H1 (cell line): ENCODE measurements at regions of chr3 and their contacts with region 1.

Region 1: GRCh38 chr3:147361454-147362420 is 44.6 kb downstream of the ZIC4 start:
- DNase-seq: peak in 1 of 2 experiments; percentile 99
- H3K4me3 ChIP-seq: peak overlapping the region in 2 of 4 experiments; percentile 14 to 48; a peak in 4 of 8 replicates
- H3K27ac ChIP-seq: no peak overlapping the region
- H3K4me1 ChIP-seq: peaks cover 10 to 25% (median 14%) of the 10 kb centered on the region in 4 experiments
- H3K27me3 ChIP-seq: peaks cover 44 to 75% (median 71%) of the 10 kb centered on the region in 4 experiments
- CTCF ChIP-seq: peak; percentile 78 to 88 (median 82)
- EP300 ChIP-seq: no peak
- POLR2A ChIP-seq: no peak
- RAD21 ChIP-seq: peak; percentile 64 to 65

Region 2: DNA sequence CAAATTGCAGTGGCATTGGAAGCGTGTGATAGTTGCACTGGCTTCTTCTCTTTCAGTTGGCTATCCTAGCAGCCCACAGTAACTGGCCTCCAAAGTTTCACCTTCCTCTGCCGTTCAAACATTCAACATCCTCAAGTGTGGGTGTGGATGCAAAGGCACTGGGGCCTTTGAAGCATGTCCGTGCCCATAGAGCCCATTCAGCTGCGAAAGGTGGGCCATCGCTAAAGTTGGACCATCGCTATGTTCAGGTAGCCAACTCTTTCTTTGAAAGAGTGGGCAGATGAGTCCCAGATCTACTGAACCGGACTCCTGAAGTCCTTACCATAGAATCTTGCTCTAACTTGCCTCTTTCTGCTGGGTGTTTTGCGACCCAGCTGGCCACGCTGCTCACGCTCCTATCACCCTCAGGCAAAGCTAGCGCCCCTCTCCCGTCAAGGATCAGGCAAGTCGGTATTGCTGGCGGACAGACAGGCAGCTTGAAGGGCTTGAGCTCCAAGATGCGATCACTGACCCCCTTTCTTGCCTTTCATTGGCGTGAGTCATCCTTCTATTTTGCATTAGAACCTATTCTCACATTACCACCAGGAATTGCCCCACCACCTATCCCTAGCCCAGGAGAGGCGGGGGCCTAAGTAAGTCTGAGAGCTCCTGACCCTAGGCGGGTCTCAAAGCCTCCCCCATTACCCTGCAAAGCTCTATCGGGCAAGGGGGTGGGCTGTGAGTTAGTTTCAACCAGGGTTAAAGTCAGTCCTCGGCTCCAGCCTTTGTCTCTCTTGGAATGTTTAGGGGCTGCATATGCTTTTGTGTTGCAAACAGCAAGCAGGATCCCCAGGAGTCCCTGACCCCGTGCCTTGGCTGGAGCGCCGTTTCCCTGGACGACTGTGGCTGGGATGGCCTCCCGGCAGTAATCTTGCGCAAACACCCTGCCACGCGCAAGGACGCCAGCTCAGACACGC is 16.0 kb after region 1 on chr3:
- CTCF ChIA-PET with region 1: interaction called, 162 read pairs
- POLR2A ChIA-PET with region 1: interaction called, 3 read pairs
- DNase-seq: peak; percentile 76 to 82
- H3K4me3 ChIP-seq: peak overlapping the region; percentile 27 to 62 (median 36); a peak in 7 of 8 replicates
- H3K27ac ChIP-seq: peak overlapping the region; percentile 3; the same call in 1 of the 2 replicates
- H3K4me1 ChIP-seq: peaks cover 10 to 35% (median 24%) of the 10 kb centered on the region in 4 experiments
- H3K27me3 ChIP-seq: peaks cover 50 to 78% (median 65%) of the 10 kb centered on the region in 4 experiments
- CTCF ChIP-seq: no peak
- EP300 ChIP-seq: no peak
- POLR2A ChIP-seq: no peak
- RAD21 ChIP-seq: no peak; a peak in 1 of 4 replicates

Region 3: DNA sequence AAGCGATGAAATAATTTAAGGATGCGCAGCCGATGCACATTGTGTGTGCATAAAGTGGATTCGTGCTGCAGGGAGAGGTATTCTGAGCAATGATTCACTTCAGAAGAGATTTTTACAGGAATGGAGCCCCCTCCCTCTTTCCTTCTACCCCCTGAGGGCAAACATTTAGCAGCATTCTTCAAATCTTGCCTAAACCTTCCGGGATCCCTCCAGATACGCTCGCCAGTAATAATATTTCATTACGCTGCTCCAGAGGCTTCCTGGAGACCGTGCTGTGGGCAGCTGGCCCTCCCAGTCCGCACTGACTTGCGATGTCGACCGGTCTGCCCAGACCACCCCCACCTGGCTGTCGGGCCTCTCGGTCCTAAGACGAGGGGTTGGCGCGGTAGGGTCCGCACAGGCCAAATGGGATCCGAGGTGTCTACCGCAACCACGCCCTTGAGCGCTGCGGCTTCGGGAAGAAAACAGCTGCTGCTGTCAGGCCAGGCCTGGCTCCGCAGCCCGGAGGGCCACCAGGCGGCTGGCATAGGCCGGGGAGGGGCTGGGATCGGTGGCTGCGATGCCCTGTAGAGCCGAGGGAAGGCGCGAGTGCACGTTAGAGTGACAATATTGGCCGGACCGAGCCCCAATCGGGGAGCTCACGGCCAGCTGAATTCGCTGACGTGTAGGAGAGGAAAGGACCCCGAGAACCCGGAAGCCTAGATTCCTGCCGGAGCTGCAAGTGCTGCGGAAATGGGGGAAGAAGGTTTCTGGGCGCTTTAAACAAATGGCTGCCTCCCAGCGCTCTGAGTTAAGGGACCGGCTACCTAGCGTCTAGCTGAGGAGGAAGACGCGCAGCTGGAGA is 30.3 kb after region 1 on chr3:
- CTCF ChIA-PET with region 1: interaction called, 91 read pairs
- POLR2A ChIA-PET with region 1: interaction called, 3 read pairs
- DNase-seq: peak in 1 of 2 experiments; percentile 90
- H3K4me3 ChIP-seq: peak overlapping the region; percentile 30 to 68 (median 50); a peak in 7 of 8 replicates
- H3K27ac ChIP-seq: no peak overlapping the region
- H3K4me1 ChIP-seq: peaks cover 20 to 47% (median 21%) of the 10 kb centered on the region in 4 experiments
- H3K27me3 ChIP-seq: peaks cover 76 to 97% (median 92%) of the 10 kb centered on the region in 4 experiments
- CTCF ChIP-seq: peak in 2 of 3 experiments; percentile 53 to 61; a peak in 3 of 4 replicates
- EP300 ChIP-seq: no peak
- POLR2A ChIP-seq: no peak
- RAD21 ChIP-seq: peak; percentile 44 to 53

Region 4: GRCh38 chr3:147405231-147405908 is 43.6 kb after region 1 on chr3:
- CTCF ChIA-PET with region 1: interaction called, 91 read pairs
- POLR2A ChIA-PET with region 1: no interaction called
- DNase-seq: peak in 1 of 2 experiments; percentile 70
- H3K4me3 ChIP-seq: peak overlapping the region in 3 of 4 experiments; percentile 10 to 40 (median 14); a peak in 4 of 8 replicates
- H3K27ac ChIP-seq: no peak overlapping the region
- H3K4me1 ChIP-seq: peaks cover 19 to 42% (median 30%) of the 10 kb centered on the region in 4 experiments
- H3K27me3 ChIP-seq: peaks cover 53 to 87% (median 79%) of the 10 kb centered on the region in 4 experiments
- CTCF ChIP-seq: peak in 1 of 3 experiments; percentile 4; a peak in 1 of 4 replicates
- EP300 ChIP-seq: no peak
- POLR2A ChIP-seq: no peak
- RAD21 ChIP-seq: peak; percentile 24 to 38; a peak in 3 of 4 replicates